CD8-positive, alpha-beta T cell (primary cell): ENCODE measurements at regions of chr3 and their contacts with region 1.

Region 1: GRCh38 chr3:133592843-133593242 is 19.4 kb downstream of the CDV3 start:
- DNase-seq: peak in 3 of 9 experiments; percentile 49 to 71 (median 65)
- ATAC-seq: peak; percentile 78
- H3K4me3 ChIP-seq: no peak overlapping the region
- H3K4me3 Mint-ChIP-seq: no peak overlapping the region
- H3K27ac ChIP-seq: no peak overlapping the region
- H3K27ac Mint-ChIP-seq: peak overlapping the region; percentile 75
- H3K4me1 ChIP-seq: no peaks in the 10 kb centered on the region
- H3K4me1 Mint-ChIP-seq: peaks cover 26% of the 10 kb centered on the region
- H3K27me3 ChIP-seq: no peaks in the 10 kb centered on the region
- H3K27me3 Mint-ChIP-seq: no peaks in the 10 kb centered on the region
- CTCF ChIP-seq: no peak

Region 2: DNA sequence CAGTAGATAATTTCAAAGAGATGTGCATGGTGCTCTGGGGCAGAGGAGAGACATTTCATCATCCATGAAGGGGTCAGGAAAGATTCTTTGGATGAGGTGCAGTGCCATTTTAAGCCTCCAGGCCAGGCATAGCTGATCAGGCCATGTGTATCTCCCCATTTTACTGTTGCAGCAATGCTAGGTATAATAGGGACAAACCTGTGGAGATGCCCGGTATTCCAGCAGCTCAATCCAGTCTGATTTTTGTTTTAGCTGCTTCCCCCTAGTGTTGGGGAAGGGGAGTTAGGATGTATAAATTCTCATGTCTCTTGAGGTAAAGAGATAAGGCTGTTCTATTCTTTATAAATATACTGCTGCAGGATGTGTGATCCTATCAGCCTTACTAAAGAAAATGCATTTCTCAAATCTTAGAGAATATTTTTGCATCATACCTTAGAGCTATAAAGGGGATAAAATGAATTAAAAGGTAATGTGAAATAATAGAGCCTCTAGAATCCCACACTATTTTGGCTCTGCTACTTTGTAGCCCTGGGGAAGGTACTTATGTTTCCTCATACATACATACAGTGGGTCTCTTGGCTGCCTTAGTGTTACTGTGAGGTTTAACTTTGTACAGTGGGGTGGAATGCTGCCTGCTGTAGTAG is 14.2 kb before region 1 on chr3:
- CTCF ChIA-PET with region 1: interaction called, 4 read pairs
- POLR2A ChIA-PET with region 1: interaction called, 3 read pairs
- intact Hi-C with region 1: loop called in 1 of 2 experiments (anchors 2 kb)
- DNase-seq: peak in 2 of 9 experiments; percentile 18 to 40
- ATAC-seq: no peak
- H3K4me3 ChIP-seq: peak overlapping the region in 1 of 2 experiments; percentile 15
- H3K4me3 Mint-ChIP-seq: peak overlapping the region; percentile 75
- H3K27ac ChIP-seq: no peak overlapping the region
- H3K27ac Mint-ChIP-seq: peak overlapping the region; percentile 81
- H3K4me1 ChIP-seq: peaks cover 63% of the 10 kb centered on the region
- H3K4me1 Mint-ChIP-seq: peaks cover 82% of the 10 kb centered on the region
- H3K27me3 ChIP-seq: no peaks in the 10 kb centered on the region
- H3K27me3 Mint-ChIP-seq: no peaks in the 10 kb centered on the region
- CTCF ChIP-seq: peak; percentile 57

Region 3: DNA sequence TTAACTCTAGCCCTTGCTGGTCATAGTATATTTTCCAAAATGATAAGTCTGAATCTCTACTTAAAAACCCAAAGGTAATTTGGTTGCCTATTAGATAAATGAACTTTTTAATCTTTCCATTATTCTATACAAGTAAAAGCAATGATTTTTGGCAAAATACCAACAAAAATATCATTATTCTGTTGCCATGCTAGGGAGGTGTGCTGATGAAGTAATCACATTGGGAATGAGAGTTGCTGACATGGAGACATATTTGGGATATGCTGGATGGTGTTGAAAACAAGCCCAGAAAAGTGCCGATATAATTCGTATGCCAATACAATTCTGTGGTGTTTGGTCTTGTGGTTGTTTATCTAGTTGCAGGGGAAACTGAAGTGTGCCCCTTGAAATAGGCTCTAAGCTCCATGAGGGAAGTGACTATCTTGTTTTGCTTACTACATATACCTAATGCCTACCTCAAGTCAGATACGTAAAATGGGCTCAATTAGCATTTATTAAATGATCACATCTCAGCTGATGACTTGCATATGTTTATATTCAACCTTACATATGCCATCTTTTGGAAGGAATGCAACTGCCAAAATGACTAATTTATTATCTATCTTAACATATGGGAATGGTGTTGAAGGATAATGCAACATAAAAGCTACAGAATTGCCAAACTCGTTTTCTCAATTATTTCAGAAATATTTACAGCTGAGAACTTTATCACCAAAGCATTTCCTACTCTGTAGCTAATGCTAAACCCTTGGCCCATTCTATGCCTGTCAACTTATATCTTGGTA is 63.1 kb after region 1 on chr3:
- CTCF ChIA-PET with region 1: no interaction called
- POLR2A ChIA-PET with region 1: no interaction called
- intact Hi-C with region 1: loop called in 1 of 2 experiments (anchors 5 kb)
- DNase-seq: no peak
- ATAC-seq: no peak
- H3K4me3 ChIP-seq: no peak overlapping the region
- H3K4me3 Mint-ChIP-seq: no peak overlapping the region
- H3K27ac ChIP-seq: no peak overlapping the region
- H3K27ac Mint-ChIP-seq: no peak overlapping the region
- H3K4me1 ChIP-seq: peaks cover 10% of the 10 kb centered on the region
- H3K4me1 Mint-ChIP-seq: peaks cover 18% of the 10 kb centered on the region
- H3K27me3 ChIP-seq: no peaks in the 10 kb centered on the region
- H3K27me3 Mint-ChIP-seq: no peaks in the 10 kb centered on the region
- CTCF ChIP-seq: no peak